GM10248 (cell line): ENCODE measurements at regions of chr20 and their contacts with region 1.

Region 1: GRCh38 chr20:8722276-8722928 is 346.5 kb upstream of the PLCB4 start:
- DNase-seq: peak; percentile 31
- CTCF ChIP-seq: peak; percentile 73

Region 2: GRCh38 chr20:6828794-6829423 is 1893.5 kb before region 1 on chr20:
- CTCF ChIA-PET with region 1: interaction called, 13 read pairs
- POLR2A ChIA-PET with region 1: no interaction called
- DNase-seq: peak; percentile 39
- CTCF ChIP-seq: peak; percentile 70

Region 3: DNA sequence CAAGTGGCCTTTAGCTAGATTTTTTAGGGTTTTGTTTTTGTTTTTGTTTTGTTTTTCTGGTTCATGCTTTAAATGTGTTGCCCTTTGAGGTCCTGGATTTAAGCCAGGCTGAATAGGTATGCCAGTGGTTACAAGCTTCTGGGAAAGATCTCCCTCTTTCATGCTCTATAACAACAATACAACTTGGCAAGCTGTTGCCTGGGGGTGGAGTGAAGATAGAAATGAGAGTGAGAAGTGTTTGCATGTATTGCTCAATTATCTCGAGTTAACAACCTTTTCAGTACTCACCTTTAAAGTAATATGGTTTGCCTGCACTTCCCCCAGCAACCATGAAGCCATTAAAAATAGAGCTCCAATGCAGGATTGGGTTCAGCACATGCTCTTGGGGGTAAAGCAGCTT is 762.9 kb before region 1 on chr20:
- CTCF ChIA-PET with region 1: no interaction called
- POLR2A ChIA-PET with region 1: no interaction called
- DNase-seq: no peak
- CTCF ChIP-seq: no peak

Region 4: GRCh38 chr20:8043687-8044282 is 678.6 kb before region 1 on chr20:
- CTCF ChIA-PET with region 1: interaction called, 129 read pairs
- POLR2A ChIA-PET with region 1: no interaction called
- DNase-seq: peak; percentile 57
- CTCF ChIP-seq: peak; percentile 66

Region 5: DNA sequence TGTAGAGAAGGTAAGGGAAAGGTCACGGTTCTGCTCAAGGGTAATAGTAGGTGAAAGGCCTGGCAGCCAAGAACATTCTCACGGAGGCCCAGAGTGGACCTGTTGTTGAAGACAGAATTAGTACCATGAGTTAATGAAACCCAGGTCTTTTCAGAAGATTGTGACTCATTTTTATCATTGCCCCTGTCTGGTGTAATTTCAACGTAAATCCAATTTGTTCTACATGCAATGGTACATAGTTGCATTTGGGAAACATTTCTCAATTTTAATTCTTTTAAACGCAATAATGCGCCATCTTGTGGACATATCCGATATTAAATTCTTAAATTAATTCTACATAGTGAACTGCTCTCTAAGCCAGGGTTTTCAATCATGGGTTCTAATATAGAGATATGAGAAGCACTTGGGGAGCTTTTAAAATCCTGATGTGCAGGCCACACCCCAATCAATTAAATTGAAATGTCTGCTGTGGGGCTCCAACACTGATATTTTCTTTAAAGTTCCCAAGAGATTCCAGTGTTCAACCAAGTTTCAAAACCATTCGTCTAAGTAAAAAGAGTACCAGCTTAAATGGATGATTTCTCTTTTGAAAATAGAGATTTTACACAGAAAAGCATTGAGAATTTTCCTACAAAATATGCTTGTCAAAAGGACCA is 332.9 kb before region 1 on chr20:
- CTCF ChIA-PET with region 1: interaction called, 28 read pairs
- POLR2A ChIA-PET with region 1: no interaction called
- DNase-seq: peak; percentile 11
- CTCF ChIP-seq: no peak

Region 6: DNA sequence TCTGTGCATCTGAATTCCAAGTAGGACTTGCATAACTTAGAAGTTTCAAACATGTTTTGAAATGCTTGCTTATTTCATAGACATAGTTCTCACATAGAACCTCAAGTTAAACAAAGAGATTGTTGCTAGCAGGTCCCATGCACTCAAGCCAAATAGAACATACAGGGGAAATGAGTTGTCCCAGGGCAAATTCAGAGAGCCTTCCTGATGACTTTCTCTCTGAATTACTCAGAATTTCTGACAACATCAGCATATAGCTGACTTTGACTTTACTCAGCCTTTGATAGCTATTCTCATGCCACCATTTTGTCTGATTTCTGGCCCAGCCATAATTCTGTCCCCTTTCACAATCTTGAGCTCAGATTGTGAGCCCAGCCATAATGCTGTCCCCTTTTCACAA is 13.3 kb after region 1 on chr20:
- CTCF ChIA-PET with region 1: interaction called, 37 read pairs
- POLR2A ChIA-PET with region 1: no interaction called
- DNase-seq: no peak
- CTCF ChIP-seq: no peak